Prostate gland (tissue), 2 donors: ENCODE measurements at regions of chr12 and their contacts with region 1.

Region 1: GRCh38 chr12:101697197-101697929 is at the start of gene CHPT1:
- DNase-seq: peak; percentile 57
- H3K4me3 ChIP-seq: peak within 1 kb of the TSS; percentile 83 to 91
- H3K27ac ChIP-seq: peak within 1 kb of the TSS; percentile 86 to 90
- H3K4me1 ChIP-seq: no peaks in the 10 kb centered on the region
- H3K27me3 ChIP-seq: no peaks in the 10 kb centered on the region
- CTCF ChIP-seq: no peak
- POLR2A ChIP-seq: peak; percentile 42
- total RNA-seq, gene CHPT1: 106 to 129 TPM

Region 2: DNA sequence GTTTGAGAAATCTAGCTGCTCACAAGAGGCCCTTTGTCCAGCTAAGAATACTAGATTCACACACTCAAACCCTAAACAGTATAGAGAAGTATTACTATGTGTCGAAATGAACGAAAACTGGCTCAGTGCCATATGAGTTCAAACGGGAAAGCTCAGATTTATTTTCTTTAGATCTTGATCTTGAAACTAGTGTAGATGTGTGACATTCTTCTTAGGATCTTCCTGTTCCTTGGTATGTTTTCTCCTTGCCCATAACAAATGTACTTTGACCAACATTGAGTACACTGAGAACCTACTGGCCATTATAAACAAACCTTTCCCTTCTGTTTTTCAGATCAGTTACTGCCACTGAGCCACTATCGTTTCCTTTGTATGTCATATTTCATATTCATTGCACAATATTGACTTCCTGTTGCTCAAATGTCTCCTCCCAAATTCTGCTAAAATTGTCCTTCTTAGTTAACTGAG is 81.3 kb before region 1 on chr12:
- intact Hi-C with region 1: loop called (anchors 5 kb)
- DNase-seq: peak; percentile 80
- H3K4me3 ChIP-seq: no peak overlapping the region
- H3K27ac ChIP-seq: peak overlapping the region; percentile 79 to 84
- H3K4me1 ChIP-seq: peaks cover 13% of the 10 kb centered on the region
- H3K27me3 ChIP-seq: no peaks in the 10 kb centered on the region
- CTCF ChIP-seq: peak in 1 of 4 experiments; percentile 20
- POLR2A ChIP-seq: no peak